ENCODE measurements at regions of chr1 and their contacts with region 1.

Region 1: DNA sequence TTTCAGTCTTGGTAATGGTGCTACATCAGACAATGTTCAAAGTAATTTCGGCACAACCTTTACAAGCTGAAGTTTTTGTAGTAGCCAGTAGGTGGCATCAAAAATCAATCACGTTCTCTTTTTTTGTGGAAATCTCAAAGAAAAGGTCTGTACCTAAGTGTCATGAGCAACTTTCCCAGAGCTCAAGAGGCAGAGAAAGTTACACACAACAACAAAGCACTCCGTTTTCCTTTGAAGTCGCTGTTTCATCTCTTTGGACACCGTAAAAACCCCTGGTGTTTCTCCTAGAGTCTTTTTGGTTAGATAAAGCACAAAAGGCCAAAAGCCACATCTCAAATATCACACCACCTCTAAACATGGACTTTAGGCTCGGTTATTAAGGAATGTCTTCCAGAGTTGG is 131.6 kb downstream of the LHX8 start:
- DNase-seq: no peak

Region 2: DNA sequence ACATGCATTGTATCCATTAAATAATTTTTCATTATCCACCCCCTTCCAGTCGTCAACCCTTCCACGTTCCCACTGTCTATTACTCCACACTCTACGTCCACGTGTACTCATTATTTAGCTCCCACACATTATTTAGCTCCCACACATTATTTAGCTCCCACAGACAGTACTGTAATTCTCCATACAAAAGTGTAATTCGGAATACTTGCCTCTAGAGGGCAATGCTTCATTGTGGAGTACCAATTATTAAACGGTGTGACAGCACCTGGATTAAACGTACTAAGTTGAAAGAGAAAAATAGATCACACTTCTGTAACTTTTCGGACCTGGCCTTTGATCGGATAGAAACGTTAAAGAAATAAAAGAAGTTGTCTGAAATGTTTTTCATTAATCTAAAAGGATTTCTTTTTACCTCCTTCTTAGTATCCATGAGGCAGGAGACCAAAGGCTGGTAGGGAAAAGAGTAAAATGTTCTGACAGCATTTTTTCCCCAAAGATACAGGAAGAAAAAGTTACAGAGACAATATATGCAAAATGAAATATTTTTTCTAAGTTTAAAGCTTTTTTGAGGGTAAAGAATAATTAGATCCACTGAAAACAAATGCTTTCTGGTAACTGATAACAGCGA is 32.4 kb before region 1 on chr1:
- intact Hi-C with region 1: no loop called
- DNase-seq: no peak

Region 3: DNA sequence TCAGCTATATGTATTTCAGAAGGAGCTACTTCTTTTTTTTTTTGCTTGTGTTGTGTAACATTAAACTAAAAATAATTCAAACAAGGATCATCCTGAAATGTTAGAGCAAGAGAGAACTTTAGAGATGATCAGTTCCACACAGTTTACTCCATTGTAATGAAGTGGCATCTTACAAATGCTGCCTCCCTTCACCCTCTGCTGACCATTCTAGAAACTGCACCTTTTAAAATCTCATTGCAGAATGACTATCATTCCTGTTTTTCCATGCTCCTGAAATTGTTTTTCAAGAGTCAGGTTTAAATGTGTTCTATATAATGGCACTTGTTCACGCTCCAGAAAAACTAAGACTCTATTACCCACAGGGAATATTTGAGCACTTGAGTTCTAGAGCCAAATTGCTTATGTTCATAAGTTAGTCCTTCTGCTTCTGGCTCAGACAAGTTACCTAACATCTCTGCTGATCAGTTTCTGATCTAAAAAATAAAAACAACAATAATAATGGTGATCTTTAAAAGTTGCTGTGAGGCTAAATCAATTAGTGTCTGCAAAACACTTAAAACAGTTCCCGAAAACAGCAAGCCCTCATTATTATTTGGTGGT is 366.7 kb after region 1 on chr1:
- intact Hi-C with region 1: loop called (anchors 1 kb)
- DNase-seq: no peak

Measured in posterior cingulate gyrus (tissue), 11 donors.